Activated naive CD8-positive, alpha-beta T cell treated with anti-CD3 and anti-CD28 coated beads, Interleukin-2, amount 10 ng/mL, durations not matched to agents 7 days and 5 days (primary cell): ENCODE measurements at regions of chr14 and their contacts with region 1.

Region 1: DNA sequence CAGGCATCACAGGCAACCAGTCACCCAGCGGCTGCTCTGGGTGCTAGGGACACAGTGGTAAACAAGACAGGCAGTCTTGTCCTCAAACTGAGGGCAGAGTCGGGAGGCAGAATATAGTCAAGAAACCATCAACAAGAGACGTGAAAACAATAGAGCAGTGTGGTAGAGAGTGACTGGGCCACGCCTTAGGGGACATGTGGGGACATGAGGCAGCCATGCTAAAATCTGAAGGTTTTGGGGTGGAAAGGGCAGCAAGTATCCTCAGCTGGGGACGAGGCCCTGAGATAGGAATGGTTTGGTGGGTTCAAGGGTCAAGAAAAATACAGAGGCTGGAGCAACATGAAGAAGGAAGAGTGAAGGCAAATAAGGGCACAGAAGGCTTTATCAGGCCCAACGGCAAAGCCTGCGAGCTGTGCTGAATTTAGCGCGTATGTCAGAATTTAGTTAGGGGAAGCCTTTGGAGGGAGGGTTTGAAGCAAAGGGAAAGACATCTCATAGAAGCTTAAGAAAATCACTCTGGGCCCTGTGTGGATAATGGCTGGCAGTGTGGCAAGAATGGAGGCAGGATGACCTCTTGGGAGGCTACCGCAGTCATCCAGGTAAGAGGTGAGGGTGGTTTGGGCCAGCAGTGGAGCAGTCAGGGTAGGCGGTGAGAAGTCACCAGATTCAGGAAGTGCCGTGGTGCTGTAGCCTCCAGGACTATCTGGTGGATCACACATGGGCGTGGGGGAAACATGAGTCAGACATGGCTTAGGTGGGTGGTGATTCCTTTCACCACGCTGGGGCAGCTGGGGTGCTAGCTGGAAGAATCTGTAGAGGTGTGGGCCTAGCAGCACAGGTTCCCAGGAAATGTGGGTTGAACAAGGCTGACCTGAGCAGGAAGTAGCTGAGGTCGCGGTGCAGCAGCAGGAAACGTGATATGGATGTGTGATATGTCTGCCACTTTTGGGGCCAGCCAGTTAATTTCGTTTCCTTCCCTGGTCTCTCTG is 3.0 kb downstream of the EVL start:
- DNase-seq: peak; percentile 81
- ATAC-seq: peak; percentile 65
- H3K4me3 Mint-ChIP-seq: peak overlapping the region; percentile 96
- H3K27ac Mint-ChIP-seq: peak overlapping the region; percentile 97
- H3K4me1 Mint-ChIP-seq: peaks cover 46% of the 10 kb centered on the region
- H3K27me3 Mint-ChIP-seq: no peaks in the 10 kb centered on the region

Region 2: DNA sequence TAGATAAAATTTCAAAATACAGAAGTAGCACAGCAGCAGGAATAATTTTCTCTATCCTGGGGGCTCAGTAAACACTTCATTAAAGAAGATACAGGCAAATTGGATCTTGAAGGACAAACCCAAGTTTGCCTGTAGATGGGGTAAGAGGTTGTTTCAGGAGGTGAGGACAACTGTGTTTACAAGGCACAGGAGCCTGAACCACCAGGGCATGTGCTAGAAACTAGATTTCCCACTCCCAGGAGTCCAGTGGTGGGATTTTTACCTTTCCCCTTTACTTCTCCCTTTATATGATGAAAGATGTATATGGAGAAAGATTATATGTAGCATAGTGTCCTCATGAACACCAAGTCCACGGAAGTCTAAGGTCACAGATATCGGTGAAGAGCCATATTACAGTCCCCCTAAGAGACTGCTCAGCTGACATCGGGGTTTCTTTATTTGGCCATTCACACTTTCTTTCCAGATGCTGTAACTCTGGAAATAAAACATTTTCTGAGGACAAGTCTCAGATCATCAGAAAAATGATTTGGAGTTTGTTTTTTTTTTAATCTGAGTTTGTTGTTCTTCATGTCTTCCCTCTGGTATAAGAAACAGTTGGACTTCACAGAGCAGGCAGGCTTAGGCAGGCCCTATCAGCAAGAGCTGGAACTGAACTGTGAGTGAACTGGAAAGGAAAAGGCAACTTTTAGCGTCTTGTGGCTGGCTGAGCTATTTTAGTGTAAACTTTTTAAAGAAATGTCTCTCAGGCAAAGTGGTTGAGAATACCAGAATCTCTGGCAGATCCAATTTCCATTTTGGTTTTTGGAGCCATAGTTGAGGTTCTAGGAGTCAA is 11.1 kb before region 1 on chr14:
- POLR2A ChIA-PET with region 1: interaction called, 75 read pairs
- DNase-seq: no peak
- ATAC-seq: peak; percentile 51
- H3K4me3 Mint-ChIP-seq: peak overlapping the region; percentile 68
- H3K27ac Mint-ChIP-seq: peak overlapping the region; percentile 82
- H3K4me1 Mint-ChIP-seq: peaks cover 63% of the 10 kb centered on the region
- H3K27me3 Mint-ChIP-seq: no peaks in the 10 kb centered on the region

Region 3: GRCh38 chr14:100108042-100108825 is 40.0 kb after region 1 on chr14:
- POLR2A ChIA-PET with region 1: interaction called, 198 read pairs
- DNase-seq: peak; percentile 87
- ATAC-seq: peak; percentile 50
- H3K4me3 Mint-ChIP-seq: no peak overlapping the region
- H3K27ac Mint-ChIP-seq: peak overlapping the region; percentile 84
- H3K4me1 Mint-ChIP-seq: peaks cover 69% of the 10 kb centered on the region
- H3K27me3 Mint-ChIP-seq: no peaks in the 10 kb centered on the region

Region 4: DNA sequence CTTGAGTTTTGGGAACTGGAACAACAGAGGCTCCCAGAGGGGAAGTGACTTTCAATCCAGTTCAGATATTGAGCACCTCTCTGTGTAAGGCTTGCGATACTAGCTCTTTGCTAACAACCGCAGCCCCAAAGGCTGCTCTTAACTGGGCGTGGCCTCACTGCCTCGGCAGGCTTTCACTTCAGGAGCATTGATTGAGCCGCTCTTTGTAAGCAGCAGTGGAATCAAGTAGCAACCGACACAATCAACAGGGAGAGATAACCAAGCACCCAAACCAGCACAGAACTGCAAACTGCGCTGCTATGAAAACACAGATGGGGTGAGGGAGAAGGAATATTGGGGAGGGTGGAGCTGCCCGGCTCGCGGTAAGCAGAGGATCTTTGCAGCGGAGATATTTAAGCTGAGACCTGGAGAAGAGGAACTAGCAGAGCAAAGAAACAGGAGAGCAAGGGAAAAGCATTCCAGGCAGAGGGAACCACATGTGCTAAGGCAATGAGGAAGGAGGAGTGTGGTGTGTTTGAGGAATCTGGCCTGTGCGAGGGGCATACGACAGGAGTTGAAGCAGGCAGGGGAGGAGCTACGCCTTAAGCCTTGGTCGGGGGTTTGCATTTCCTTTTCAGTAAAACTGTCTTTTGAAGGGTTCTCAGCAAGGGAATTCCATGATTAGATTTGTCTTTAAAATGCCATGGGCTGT is 153.4 kb after region 1 on chr14:
- POLR2A ChIA-PET with region 1: interaction called, 33 read pairs
- DNase-seq: peak; percentile 67
- ATAC-seq: peak; percentile 91
- H3K4me3 Mint-ChIP-seq: no peak overlapping the region
- H3K27ac Mint-ChIP-seq: no peak overlapping the region
- H3K4me1 Mint-ChIP-seq: peaks cover 33% of the 10 kb centered on the region
- H3K27me3 Mint-ChIP-seq: no peaks in the 10 kb centered on the region